ENCODE measurements at regions of chr1 and their contacts with region 1.

Region 1: DNA sequence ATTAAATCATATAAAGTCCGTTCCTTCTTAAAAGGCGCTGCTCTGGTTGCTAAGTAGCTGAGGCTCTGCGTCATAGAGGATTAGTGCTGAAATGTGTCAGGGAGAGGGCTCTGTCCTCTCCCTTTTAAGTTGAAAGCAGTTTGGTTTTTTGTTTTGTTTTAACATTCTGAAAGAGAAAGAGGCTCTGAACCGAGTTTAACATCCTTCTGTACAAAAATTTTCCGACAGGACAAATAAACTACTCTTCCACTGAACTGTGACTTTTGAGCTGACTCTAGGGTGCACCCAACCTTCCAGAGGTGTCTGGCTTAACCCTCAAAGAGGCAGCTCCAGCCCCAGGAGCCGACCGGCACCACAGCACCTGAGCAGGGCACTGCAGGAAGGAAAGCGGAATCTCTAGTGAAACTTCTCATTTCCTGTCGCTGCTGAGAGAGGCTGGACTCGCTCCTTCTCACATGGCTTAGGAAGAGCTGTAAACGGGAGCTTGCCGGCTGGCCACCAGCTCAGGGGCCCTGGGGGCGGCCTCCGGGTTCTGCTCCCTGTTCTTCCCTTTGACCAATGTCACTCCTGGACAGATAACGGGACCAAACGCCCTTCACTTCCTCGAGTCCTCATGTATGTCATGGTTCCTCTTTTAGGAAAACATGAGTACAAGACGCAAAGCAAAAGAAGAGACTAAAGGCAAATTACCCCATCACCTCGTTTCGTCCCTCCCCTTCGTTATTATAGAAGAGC is 1.2 kb downstream of the VAV3 start:
- DNase-seq: peak; percentile 62
- ATAC-seq: peak; percentile 85
- H3K4me3 Mint-ChIP-seq: peak overlapping the region; percentile 84
- H3K27ac Mint-ChIP-seq: peak overlapping the region; percentile 89
- H3K4me1 Mint-ChIP-seq: peaks cover 23% of the 10 kb centered on the region
- H3K27me3 Mint-ChIP-seq: no peaks in the 10 kb centered on the region

Region 2: GRCh38 chr1:107056426-107057196 is 907.2 kb before region 1 on chr1 and contains the start of gene PRMT6:
- CTCF ChIA-PET with region 1: no interaction called
- POLR2A ChIA-PET with region 1: no interaction called
- intact Hi-C with region 1: loop called in 1 of 2 experiments (anchors 10 kb)
- DNase-seq: peak; percentile 89
- ATAC-seq: peak; percentile 94
- H3K4me3 Mint-ChIP-seq: peak within 1 kb of the TSS; percentile 89
- H3K27ac Mint-ChIP-seq: peak within 1 kb of the TSS; percentile 93
- H3K4me1 Mint-ChIP-seq: peaks cover 17% of the 10 kb centered on the region
- H3K27me3 Mint-ChIP-seq: no peaks in the 10 kb centered on the region
- total RNA-seq, gene PRMT6: 13.3 to 15.4 TPM

Region 3: DNA sequence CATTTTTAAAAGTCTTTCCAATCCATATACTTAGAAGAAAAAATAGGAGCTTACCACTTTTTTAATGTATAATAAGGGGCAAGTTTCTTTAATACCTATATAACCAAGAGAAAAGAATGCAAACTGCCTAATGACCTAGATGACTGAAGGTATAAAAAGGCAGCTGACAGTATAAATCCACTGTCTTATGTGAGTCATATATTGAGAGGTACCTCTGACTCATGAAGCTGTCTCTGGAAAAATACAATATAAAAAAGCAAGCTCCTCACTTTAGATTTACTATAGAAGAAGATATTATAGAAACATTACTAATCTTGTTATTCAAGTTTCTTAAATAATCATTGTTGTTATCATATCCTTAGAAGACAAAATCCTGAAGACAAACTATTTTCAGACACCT is 143.0 kb before region 1 on chr1:
- CTCF ChIA-PET with region 1: interaction called, 6 read pairs
- POLR2A ChIA-PET with region 1: no interaction called
- intact Hi-C with region 1: loop called (anchors 1 to 5 kb)
- DNase-seq: no peak
- ATAC-seq: peak; percentile 81
- H3K4me3 Mint-ChIP-seq: no peak overlapping the region
- H3K27ac Mint-ChIP-seq: peak overlapping the region; percentile 93
- H3K4me1 Mint-ChIP-seq: peaks cover 38% of the 10 kb centered on the region
- H3K27me3 Mint-ChIP-seq: no peaks in the 10 kb centered on the region

Region 4: GRCh38 chr1:107897438-107898345 is 66.1 kb before region 1 on chr1:
- CTCF ChIA-PET with region 1: no interaction called
- POLR2A ChIA-PET with region 1: no interaction called
- intact Hi-C with region 1: loop called in 1 of 2 experiments (anchors 2 kb)
- DNase-seq: peak; percentile 18
- ATAC-seq: peak; percentile 79
- H3K4me3 Mint-ChIP-seq: peak overlapping the region; percentile 12
- H3K27ac Mint-ChIP-seq: peak overlapping the region; percentile 69
- H3K4me1 Mint-ChIP-seq: peaks cover 47% of the 10 kb centered on the region
- H3K27me3 Mint-ChIP-seq: no peaks in the 10 kb centered on the region

Region 5: GRCh38 chr1:108049178-108049819 is 85.5 kb after region 1 on chr1:
- CTCF ChIA-PET with region 1: interaction called, 3 read pairs
- POLR2A ChIA-PET with region 1: no interaction called
- intact Hi-C with region 1: loop called (anchors 1 to 5 kb)
- DNase-seq: peak; percentile 51
- ATAC-seq: no peak
- H3K4me3 Mint-ChIP-seq: no peak overlapping the region
- H3K27ac Mint-ChIP-seq: no peak overlapping the region
- H3K4me1 Mint-ChIP-seq: peaks cover 20% of the 10 kb centered on the region
- H3K27me3 Mint-ChIP-seq: no peaks in the 10 kb centered on the region

Region 6: GRCh38 chr1:108199781-108200570 is 236.2 kb after region 1 on chr1 and contains the start of gene SLC25A24:
- CTCF ChIA-PET with region 1: no interaction called
- POLR2A ChIA-PET with region 1: no interaction called
- intact Hi-C with region 1: loop called in 1 of 2 experiments (anchors 2 kb)
- DNase-seq: peak; percentile 86
- ATAC-seq: peak; percentile 97
- H3K4me3 Mint-ChIP-seq: peak within 1 kb of the TSS; percentile 84
- H3K27ac Mint-ChIP-seq: peak within 1 kb of the TSS; percentile 78
- H3K4me1 Mint-ChIP-seq: peaks cover 26% of the 10 kb centered on the region
- H3K27me3 Mint-ChIP-seq: no peaks in the 10 kb centered on the region
- total RNA-seq, gene SLC25A24: 13.6 to 15.4 TPM

Measured in activated CD4-positive, alpha-beta T cell treated with anti-CD3 and anti-CD28 coated beads for 36 hours (primary cell).